ENCODE measurements at regions of chr16 and their contacts with region 1.

Region 1: GRCh38 chr16:73531021-73531420 is 483.1 kb upstream of the ZFHX3 start:
- DNase-seq: no peak
- H3K27ac ChIP-seq: no peak overlapping the region
- CTCF ChIP-seq: no peak

Region 2: GRCh38 chr16:73457851-73458250 is 73.2 kb before region 1 on chr16:
- CTCF ChIA-PET with region 1: no interaction called
- POLR2A ChIA-PET with region 1: no interaction called
- DNase-seq: no peak
- H3K27ac ChIP-seq: no peak overlapping the region
- CTCF ChIP-seq: no peak

Region 3: DNA sequence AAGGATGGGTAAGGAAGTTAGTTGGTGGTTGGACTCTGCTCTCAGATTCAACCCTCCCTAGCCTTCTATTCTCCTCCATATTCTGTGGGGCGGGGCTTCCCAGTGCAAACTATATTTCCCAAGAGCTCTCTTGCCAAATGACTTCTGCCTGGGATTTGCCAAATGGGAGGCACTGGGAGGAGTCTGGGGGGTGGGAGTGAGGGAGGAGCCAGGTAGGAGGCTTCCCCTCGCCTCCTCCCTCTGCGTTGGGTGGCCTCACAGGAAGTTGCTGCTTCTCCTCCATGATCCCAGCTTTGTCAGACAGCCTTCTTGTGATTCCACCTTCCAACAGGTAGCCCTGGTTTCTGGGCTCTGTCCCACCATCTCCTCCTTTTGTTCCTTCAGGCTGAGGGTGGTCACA is 34.4 kb before region 1 on chr16:
- CTCF ChIA-PET with region 1: interaction called, 10 read pairs
- POLR2A ChIA-PET with region 1: no interaction called
- DNase-seq: no peak
- H3K27ac ChIP-seq: no peak overlapping the region
- CTCF ChIP-seq: no peak

Region 4: DNA sequence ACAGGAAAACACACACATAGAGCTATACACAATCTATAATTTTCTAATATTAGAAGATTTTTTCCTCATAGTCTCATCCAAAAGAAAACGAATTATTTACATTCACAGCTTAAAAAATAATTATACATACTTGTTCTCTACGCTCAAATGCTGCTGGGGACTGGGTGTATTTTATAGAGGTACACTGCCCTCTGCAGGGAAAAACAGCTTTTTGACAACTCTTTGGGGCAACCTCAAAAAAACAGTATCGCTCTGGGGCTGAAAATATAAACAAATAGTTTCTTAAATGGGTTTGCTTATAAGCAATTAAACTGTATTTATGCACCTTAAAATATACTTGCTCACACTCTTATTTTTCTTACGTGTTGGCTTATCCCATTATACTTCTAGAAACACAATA is 503.8 kb after region 1 on chr16:
- CTCF ChIA-PET with region 1: no interaction called
- POLR2A ChIA-PET with region 1: no interaction called
- DNase-seq: peak; percentile 16
- H3K27ac ChIP-seq: no peak overlapping the region
- CTCF ChIP-seq: no peak; the same call in 1 of the 2 replicates

Measured in RWPE1 (cell line).